ENCODE measurements at regions of chr12 and their contacts with region 1.

Region 1: GRCh38 chr12:117236456-117237001 is 46.3 kb upstream of the FBXO21 start:
- DNase-seq: peak; percentile 87
- ATAC-seq: peak; percentile 81
- H3K4me3 Mint-ChIP-seq: no peak overlapping the region
- H3K27ac Mint-ChIP-seq: no peak overlapping the region
- H3K4me1 Mint-ChIP-seq: no peaks in the 10 kb centered on the region
- H3K27me3 Mint-ChIP-seq: peaks cover 2% of the 10 kb centered on the region

Region 2: DNA sequence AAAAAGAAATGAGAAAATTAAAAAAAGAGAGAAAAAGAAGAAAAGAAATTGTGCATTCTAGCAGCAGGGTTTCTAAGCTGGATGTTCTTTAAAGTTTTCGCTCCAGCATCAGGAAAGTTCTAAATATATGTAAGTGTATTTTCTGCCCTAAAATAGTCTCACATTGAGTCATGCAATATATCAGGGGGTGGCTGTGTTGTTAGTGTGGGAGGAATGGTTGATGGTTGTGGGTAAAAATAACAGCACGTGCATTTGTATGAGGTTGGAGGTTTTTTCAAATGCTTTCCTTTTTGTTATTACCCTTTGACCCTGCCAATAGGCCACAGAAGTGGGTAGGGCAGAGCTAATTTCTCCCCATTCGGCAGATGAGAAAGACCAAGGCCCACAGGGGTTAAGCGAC is 18.9 kb after region 1 on chr12:
- CTCF ChIA-PET with region 1: interaction called, 17 read pairs
- POLR2A ChIA-PET with region 1: no interaction called
- DNase-seq: no peak
- ATAC-seq: no peak
- H3K4me3 Mint-ChIP-seq: no peak overlapping the region
- H3K27ac Mint-ChIP-seq: no peak overlapping the region
- H3K4me1 Mint-ChIP-seq: no peaks in the 10 kb centered on the region
- H3K27me3 Mint-ChIP-seq: no peaks in the 10 kb centered on the region

Measured in activated CD8-positive, alpha-beta T cell treated with anti-CD3 and anti-CD28 coated beads, Interleukin-2, amount 10 ng/mL, durations not matched to agents 7 days and 5 days (primary cell).